Calu3 (cell line): ENCODE measurements at regions of chr17 and their contacts with region 1.

Region 1: GRCh38 chr17:37047631-37048104 is 98.9 kb downstream of the AATF start:
- DNase-seq: peak; percentile 95
- H3K4me3 Mint-ChIP-seq: no peak overlapping the region
- H3K27ac Mint-ChIP-seq: no peak overlapping the region
- H3K4me1 Mint-ChIP-seq: peaks cover 7% of the 10 kb centered on the region
- H3K27me3 Mint-ChIP-seq: no peaks in the 10 kb centered on the region
- CTCF ChIP-seq: peak; percentile 100

Region 2: DNA sequence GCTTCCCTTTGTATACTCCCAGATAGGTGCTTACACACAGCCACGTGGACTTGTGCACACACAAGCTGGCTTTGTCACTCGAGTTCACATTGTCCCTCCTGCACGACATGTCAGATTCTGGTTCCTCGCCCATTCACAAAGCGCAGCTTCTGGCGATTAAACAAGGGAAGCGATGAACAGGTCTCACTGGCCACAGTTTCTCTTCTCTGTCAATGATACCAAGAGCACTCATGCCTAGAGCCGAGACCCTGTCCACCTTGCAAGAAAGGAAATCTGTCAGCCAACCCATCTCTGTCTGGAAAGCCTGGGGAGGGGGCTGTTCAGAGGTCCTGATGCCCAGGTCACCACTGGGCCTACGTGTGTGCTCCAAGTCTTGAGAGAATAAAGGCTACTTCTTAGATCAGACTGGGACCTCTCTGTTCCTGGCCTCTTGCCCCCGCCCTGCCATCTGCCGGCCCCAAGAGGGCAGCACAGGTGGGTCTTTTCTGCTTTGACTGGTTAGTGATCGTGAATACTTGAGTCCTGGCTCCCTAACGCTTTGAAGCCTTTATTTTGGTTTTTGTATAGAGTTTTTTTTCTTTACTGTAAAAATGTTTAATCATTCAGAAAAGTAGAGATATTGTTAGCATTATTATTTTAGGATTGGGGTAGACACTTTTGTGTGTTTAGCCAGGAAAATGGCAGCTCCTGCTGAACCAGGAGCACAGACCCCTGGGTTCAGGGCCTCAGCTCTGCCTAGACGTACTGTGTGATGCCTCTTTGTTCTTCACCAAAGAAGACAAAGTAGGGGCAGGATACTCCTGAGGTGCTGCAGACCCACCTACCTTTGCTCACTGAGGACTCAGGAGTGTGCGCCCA is 341.6 kb before region 1 on chr17:
- CTCF ChIA-PET with region 1: interaction called, 6 read pairs
- intact Hi-C with region 1: loop called (anchors 1 kb)
- DNase-seq: peak; percentile 90
- H3K4me3 Mint-ChIP-seq: no peak overlapping the region
- H3K27ac Mint-ChIP-seq: no peak overlapping the region
- H3K4me1 Mint-ChIP-seq: no peaks in the 10 kb centered on the region
- H3K27me3 Mint-ChIP-seq: peaks cover 93% of the 10 kb centered on the region
- CTCF ChIP-seq: peak; percentile 99

Region 3: GRCh38 chr17:36755586-36755985 is 292.1 kb before region 1 on chr17:
- CTCF ChIA-PET with region 1: interaction called, 5 read pairs
- intact Hi-C with region 1: loop called (anchors 10 kb)
- DNase-seq: peak; percentile 84
- H3K4me3 Mint-ChIP-seq: no peak overlapping the region
- H3K27ac Mint-ChIP-seq: no peak overlapping the region
- H3K4me1 Mint-ChIP-seq: no peaks in the 10 kb centered on the region
- H3K27me3 Mint-ChIP-seq: peaks cover 77% of the 10 kb centered on the region
- CTCF ChIP-seq: peak; percentile 93

Region 4: DNA sequence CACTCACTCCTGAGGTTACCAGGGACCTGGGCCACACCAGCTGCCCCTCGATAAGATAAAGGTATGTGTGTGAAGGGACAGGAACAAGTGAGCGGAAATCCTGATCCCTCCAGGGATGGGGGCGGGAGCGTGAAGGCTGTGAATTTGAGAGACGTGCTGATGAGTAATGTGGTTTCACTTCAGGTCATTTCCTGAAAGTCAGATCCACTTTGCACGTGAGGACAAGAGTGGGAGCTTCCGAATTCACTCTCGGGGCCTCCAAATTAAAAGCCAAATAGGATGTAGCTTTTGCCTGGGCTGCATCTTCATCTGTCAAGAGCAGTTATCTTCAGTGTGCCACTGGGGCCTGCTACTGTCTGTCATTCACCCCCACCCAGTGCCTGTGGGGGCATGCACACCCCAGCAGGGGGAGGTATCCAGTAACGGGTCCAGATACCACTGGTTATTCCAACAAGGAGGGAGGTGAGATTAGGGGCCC is 197.8 kb before region 1 on chr17:
- CTCF ChIA-PET with region 1: no interaction called
- intact Hi-C with region 1: loop called (anchors 10 kb)
- DNase-seq: peak; percentile 50
- H3K4me3 Mint-ChIP-seq: no peak overlapping the region
- H3K27ac Mint-ChIP-seq: no peak overlapping the region
- H3K4me1 Mint-ChIP-seq: peaks cover 16% of the 10 kb centered on the region
- H3K27me3 Mint-ChIP-seq: peaks cover 38% of the 10 kb centered on the region
- CTCF ChIP-seq: peak; percentile 59

Region 5: DNA sequence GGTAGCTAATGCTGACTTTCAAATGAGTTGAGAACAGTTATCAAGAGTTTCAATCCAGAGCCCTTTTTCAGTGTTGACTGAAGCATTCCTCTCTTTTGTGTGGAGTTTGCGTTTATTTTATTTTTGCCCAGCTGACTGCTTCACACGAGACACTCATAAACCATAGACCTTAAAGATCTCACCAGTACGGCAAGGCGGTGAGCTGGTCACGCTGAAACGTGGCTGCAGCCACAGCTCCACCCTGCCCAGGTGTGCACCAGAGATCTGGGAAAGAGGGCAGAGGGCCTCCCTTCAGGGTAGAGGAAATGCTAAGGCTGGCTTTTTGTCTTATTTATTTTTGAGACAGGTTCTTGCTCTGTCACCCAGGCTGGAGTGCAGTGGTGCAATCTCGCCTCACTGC is 13.3 kb after region 1 on chr17:
- CTCF ChIA-PET with region 1: interaction called, 11 read pairs
- intact Hi-C with region 1: no loop called
- DNase-seq: no peak
- H3K4me3 Mint-ChIP-seq: no peak overlapping the region
- H3K27ac Mint-ChIP-seq: no peak overlapping the region
- H3K4me1 Mint-ChIP-seq: no peaks in the 10 kb centered on the region
- H3K27me3 Mint-ChIP-seq: peaks cover 52% of the 10 kb centered on the region
- CTCF ChIP-seq: no peak

Region 6: DNA sequence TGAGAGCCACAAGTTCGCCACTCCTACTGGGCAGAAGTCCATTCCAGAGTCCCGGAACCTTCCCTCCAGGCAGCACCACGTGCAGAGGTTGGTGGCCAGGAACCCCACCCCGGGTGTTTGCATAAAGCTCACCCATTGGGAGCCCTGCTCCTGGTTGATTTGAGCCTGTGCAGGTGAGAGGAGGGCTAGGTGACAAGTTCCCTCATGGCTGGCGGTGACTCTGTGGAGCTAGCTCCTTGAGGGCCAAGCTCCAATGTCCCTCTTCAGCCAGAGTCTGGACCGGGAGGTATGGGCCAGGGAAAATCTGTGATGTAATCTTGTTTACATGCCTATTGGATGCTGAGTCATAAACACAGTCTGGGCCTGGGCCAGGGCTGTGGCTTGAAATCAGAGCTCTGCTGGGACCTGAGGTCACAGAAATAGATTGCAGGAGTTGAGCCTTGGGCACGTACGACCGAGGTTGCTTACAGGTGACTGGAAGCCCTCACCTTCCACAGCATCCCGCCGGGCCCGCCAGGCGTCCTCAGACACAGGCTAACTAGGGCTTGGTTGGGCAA is 20.0 kb after region 1 on chr17:
- CTCF ChIA-PET with region 1: interaction called, 17 read pairs
- intact Hi-C with region 1: no loop called
- DNase-seq: peak; percentile 94
- H3K4me3 Mint-ChIP-seq: peak overlapping the region; percentile 38
- H3K27ac Mint-ChIP-seq: peak overlapping the region; percentile 12
- H3K4me1 Mint-ChIP-seq: peaks cover 19% of the 10 kb centered on the region
- H3K27me3 Mint-ChIP-seq: peaks cover 47% of the 10 kb centered on the region
- CTCF ChIP-seq: no peak